SK-MEL-5 (cell line): ENCODE measurements at regions of chr2 and their contacts with region 1.

Region 1: DNA sequence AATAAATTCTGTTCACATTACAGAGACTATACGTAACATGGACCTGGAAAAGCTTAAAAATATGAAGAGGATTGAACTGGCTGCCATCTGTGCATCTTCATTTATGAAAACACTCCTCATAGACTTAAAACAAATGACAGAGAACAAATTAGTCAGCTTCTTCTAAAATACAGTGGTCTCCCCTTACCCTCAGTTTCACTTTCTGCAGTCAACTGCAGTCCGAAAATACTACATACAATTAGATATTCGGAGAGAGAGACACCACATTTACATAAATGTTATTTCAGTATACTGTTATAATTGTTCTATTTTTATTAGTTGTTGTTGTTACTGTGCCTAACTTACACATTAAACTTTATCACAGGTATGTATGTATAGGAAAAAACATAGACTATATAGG is 6.5 kb downstream of the RNF103 start:
- DNase-seq: no peak

Region 2: DNA sequence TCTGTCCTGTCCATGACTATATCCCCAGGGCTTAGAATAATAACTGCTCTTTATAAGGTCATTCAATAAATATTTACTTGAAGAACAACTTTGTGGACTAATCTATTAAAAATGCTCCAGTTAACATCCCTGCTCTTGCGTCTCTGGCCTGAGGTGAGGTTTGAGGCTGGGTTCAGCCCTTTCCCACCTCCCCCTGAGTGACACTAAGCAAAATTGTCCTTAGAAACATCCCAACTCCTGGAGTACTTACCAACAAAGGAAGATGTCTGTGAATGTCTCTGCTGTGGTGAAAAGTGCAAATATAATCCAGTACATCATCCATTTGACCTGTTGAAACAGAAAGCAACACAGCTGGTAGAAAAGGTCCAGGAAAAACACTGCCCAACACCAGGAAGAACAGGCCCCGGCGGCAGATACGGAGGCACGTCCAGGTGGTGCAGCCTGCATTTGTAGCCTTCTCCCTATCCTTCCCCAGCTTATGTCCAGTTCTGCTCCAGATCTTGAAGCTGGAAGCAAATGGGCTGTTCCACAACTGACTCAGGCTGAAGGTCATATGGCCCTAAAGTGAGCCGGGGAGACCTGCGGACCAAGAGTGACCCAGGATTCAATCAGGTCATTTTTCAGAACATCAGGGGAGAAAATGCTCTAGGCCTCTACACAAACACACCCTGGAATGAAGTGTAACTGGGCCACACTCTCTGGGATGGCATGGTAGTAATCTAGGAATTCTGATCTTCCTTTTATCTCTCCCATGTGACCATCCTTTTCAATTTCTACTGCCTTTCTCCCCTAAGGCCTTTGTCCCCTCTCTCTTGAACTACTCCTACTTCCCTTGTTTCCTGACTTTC is 353.2 kb before region 1 on chr2:
- in situ Hi-C with region 1: no loop called
- DNase-seq: no peak

Region 3: DNA sequence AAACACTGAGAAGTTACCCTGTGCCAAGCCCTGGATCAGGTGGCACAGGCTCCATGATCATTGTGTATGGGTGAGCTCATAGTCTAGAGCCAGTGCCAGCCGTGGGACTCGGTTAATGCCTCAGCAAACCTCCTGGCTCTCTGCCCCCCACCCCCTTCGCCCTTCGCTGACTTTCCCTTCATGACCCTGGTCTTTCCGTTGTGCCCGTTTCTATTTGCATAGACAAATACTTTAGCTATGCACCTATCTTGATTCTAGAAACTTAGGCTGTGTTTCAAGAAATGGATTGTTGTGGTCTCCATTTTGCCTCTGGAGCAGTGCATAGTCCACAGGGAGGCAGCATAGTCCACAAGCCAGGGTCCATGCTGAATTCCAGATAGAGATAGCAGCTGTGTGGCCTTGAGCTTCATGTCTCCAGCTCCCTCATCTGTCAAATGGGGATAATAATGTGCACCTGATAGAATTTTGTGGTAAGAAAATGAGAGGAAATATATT is 220.8 kb before region 1 on chr2:
- in situ Hi-C with region 1: no loop called
- DNase-seq: peak; percentile 87

Region 4: GRCh38 chr2:86426272-86426671 is 190.9 kb before region 1 on chr2:
- in situ Hi-C with region 1: no loop called
- DNase-seq: no peak

Region 5: DNA sequence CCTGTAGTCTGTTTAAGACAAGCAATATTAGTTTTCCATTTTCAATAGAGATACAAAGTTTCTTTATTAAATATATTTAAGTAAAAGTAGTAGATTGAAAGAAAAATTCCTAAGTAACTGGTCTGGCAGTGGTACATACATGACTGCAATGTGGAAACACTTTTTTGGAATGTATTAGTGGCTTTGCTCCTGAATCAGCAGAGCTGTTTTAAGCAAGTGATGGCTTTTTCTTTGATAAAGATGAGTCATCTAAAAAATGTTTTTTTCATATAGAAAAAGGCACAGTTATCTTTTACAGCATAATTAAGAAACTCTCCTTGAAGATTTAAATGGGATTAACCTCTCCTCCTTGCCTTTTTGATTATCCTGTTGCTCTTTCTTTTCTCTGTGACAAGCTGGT is 141.1 kb before region 1 on chr2:
- in situ Hi-C with region 1: loop called (anchors 10 kb)
- DNase-seq: no peak